Breast epithelium (tissue), 4 donors: ENCODE measurements at regions of chr7 and their contacts with region 1.

Region 1: GRCh38 chr7:122896509-122896908 is 10.2 kb upstream of the CADPS2 start:
- DNase-seq: no peak
- H3K4me3 ChIP-seq: no peak overlapping the region
- H3K27ac ChIP-seq: no peak overlapping the region
- H3K4me1 ChIP-seq: no peaks in the 10 kb centered on the region
- H3K27me3 ChIP-seq: no peaks in the 10 kb centered on the region
- CTCF ChIP-seq: no peak
- POLR2A ChIP-seq: no peak

Region 2: GRCh38 chr7:122885583-122886356 is 10.7 kb before region 1 on chr7:
- intact Hi-C with region 1: no loop called
- DNase-seq: no peak
- H3K4me3 ChIP-seq: peak overlapping the region; percentile 56 to 95 (median 83)
- H3K27ac ChIP-seq: peak overlapping the region; percentile 89 to 95
- H3K4me1 ChIP-seq: no peaks in the 10 kb centered on the region
- H3K27me3 ChIP-seq: no peaks in the 10 kb centered on the region
- CTCF ChIP-seq: peak in 1 of 3 donors; percentile 12
- POLR2A ChIP-seq: no peak

Region 3: GRCh38 chr7:123131140-123131539 is 234.6 kb after region 1 on chr7:
- intact Hi-C with region 1: no loop called
- DNase-seq: no peak
- H3K4me3 ChIP-seq: no peak overlapping the region
- H3K27ac ChIP-seq: no peak overlapping the region
- H3K4me1 ChIP-seq: no peaks in the 10 kb centered on the region
- H3K27me3 ChIP-seq: no peaks in the 10 kb centered on the region
- CTCF ChIP-seq: no peak
- POLR2A ChIP-seq: no peak

Region 4: GRCh38 chr7:123148855-123149254 is 252.3 kb after region 1 on chr7:
- intact Hi-C with region 1: loop called (anchors 5 kb)
- DNase-seq: no peak
- H3K4me3 ChIP-seq: no peak overlapping the region
- H3K27ac ChIP-seq: no peak overlapping the region
- H3K4me1 ChIP-seq: no peaks in the 10 kb centered on the region
- H3K27me3 ChIP-seq: no peaks in the 10 kb centered on the region
- CTCF ChIP-seq: peak in 1 of 3 donors; percentile 18
- POLR2A ChIP-seq: no peak